ENCODE measurements at regions of chr2 and their contacts with region 1.

Region 1: DNA sequence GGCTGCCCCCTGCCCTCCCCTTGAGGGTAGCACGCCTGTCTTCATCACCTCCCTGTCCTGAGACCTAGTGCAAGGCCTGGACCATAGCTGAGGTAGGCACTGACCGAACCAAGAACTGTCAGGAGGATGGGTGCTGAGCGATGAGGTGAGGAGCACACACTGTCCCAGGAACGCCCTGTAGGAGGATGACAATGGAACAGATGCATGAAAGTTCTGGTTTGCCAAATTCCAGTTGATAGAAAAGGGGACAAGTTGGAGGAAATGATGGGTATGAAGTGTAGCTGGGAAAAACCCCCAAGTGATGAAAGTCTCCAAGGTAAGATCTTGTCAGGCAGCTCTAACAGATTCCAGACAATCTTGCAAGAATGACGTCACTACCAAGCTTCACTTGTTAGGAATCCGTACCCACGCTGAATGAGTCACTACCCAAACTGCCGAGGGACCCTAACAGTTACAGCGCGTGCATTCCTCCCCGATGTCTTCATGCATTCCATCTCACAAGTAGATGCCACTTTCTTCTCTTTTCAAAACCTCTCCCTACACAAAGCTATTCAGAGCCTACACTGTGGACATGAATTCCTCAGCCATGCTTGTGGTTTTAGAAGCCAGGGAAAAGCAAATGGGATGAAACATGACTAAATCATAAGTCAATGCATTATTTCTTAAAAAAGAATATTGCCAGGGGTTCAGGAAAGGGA is 27.6 kb downstream of the MRPL33 start:
- DNase-seq: peak; percentile 58 to 95
- H3K4me3 ChIP-seq: no peak overlapping the region
- H3K27ac ChIP-seq: peak overlapping the region; percentile 96 to 98
- H3K4me1 ChIP-seq: peaks cover 30 to 57% of the 10 kb centered on the region in 2 donors
- H3K27me3 ChIP-seq: no peaks in the 10 kb centered on the region
- CTCF ChIP-seq: no peak

Region 2: DNA sequence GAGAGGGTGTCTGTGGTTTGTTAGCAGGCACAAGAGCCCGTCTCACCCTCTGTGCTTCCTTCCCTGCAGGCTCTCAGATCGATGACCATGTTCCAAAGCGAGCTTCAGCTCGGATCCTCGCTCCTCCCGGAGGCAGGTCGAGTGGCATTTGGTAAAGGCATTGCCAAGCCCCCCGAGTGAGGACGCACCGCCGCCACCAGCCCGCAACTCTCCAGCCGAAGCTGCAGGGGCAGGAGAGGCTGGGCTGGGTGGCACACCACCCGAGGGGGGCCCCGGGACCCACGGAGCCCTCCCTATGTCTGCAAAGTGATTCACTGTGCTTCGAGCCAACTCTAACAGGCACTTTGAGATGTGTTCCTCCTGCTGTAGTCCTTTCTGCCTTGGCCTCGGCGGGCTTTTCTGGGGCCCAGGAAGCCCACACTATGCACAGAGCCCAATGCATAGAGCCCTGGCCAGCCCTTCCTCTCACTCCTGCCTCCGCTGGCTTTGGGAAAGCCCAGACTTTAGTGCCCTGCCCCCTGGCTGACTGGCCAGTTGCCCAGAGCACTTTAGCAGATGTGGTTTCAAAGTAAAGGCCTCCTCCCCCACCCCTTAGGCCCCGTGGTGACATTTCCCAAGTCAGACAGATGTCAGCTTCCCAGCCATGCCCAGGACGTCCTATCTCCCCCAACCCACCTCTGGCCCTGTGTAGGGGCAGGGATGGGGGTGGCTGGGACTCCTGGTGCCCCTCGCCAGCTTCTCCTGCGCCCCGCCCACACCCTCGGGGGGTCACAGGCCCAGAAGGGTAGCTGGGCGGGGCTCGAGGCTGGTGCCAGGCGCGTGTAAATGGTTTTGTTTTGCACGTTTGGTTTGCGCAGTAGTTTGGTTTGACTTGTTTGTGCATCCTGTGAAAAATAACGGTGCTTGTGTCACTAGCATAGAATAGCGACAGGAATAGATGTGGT is 852.0 kb before region 1 on chr2:
- intact Hi-C with region 1: no loop called
- DNase-seq: no peak
- H3K4me3 ChIP-seq: no peak overlapping the region
- H3K27ac ChIP-seq: no peak overlapping the region
- H3K4me1 ChIP-seq: no peaks in the 10 kb centered on the region
- H3K27me3 ChIP-seq: no peaks in the 10 kb centered on the region
- CTCF ChIP-seq: no peak

Region 3: DNA sequence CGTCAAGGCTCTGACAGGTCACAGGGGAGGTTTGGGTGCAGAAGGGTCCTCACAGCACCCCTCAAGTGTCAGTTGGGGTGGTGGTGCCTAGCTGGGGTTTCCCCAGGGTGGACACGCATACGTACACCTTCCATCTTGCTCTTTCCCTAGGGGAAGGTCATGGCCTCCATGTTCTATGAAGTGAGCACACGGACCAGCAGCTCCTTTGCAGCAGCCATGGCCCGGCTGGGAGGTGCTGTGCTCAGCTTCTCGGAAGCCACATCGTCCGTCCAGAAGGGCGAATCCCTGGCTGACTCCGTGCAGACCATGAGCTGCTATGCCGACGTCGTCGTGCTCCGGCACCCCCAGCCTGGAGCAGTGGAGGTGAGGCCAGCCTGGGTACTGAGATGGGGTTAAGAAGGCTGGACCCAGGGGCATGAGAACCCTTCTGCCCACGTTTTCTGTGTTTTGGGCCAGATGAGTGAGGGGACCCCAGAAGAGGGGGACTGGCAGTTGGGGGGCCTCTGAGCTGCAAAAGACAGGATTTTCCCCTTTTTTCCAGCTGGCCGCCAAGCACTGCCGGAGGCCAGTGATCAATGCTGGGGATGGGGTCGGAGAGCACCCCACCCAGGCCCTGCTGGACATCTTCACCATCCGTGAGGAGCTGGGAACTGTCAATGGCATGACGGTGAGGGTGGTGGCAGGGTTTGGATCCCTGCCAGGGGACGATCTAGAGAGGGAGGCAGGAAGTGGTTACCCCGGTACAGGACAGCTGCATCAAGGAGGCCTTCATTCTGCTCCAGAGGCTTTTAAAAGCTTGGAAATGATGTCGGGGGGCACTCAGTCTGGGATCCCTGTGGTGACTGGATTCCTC is 557.1 kb before region 1 on chr2:
- intact Hi-C with region 1: no loop called
- DNase-seq: no peak
- H3K4me3 ChIP-seq: no peak overlapping the region
- H3K27ac ChIP-seq: no peak overlapping the region
- H3K4me1 ChIP-seq: no peaks in the 10 kb centered on the region
- H3K27me3 ChIP-seq: no peaks in the 10 kb centered on the region
- CTCF ChIP-seq: no peak

Region 4: DNA sequence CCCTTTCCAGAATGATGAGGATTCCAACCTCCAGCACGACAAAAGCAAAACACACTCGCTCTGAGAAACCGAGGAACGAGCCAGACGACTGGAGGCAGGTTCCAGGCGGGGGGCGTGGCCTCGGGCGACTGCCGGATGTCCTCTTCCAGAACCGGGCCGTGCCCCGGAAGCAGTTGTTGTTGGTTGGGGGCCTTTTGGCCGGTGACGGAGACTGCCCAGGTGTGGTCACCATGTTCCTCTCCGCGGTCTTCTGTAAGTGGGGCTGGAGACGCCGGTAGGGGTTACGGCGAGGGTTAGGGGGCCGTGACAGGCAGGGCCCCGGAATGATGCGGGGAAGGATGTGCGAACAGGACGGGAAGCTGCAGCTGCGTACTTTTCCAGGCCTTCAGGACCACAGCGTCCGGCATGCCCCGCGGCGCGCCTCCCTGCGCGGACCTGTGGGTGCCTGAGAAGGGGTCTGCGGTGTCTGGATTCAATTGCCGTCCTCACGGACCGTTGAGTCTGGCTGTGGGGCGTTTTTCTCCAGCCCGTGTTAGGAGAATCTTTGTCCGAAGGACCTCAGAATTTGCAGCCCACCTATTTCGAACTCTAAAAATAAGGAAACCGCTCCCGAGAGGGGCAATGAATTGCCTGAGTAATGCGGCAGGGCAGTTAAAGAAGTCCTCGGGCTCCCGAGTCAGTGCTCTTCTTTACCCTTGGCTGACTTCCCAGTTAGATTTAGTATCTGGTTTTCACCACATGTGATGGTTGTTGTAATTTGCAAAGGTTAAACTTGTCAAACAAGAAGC is 27.4 kb before region 1 on chr2 and contains the start of gene MRPL33:
- intact Hi-C with region 1: loop called (anchors 1 kb)
- DNase-seq: peak; percentile 83 to 97
- H3K4me3 ChIP-seq: peak within 1 kb of the TSS; percentile 80 to 92
- H3K27ac ChIP-seq: peak within 1 kb of the TSS; percentile 90 to 96
- H3K4me1 ChIP-seq: peaks cover 9 to 22% of the 10 kb centered on the region in 2 donors
- H3K27me3 ChIP-seq: no peaks in the 10 kb centered on the region
- CTCF ChIP-seq: no peak
- total RNA-seq, gene MRPL33: 3.4 TPM

Region 5: DNA sequence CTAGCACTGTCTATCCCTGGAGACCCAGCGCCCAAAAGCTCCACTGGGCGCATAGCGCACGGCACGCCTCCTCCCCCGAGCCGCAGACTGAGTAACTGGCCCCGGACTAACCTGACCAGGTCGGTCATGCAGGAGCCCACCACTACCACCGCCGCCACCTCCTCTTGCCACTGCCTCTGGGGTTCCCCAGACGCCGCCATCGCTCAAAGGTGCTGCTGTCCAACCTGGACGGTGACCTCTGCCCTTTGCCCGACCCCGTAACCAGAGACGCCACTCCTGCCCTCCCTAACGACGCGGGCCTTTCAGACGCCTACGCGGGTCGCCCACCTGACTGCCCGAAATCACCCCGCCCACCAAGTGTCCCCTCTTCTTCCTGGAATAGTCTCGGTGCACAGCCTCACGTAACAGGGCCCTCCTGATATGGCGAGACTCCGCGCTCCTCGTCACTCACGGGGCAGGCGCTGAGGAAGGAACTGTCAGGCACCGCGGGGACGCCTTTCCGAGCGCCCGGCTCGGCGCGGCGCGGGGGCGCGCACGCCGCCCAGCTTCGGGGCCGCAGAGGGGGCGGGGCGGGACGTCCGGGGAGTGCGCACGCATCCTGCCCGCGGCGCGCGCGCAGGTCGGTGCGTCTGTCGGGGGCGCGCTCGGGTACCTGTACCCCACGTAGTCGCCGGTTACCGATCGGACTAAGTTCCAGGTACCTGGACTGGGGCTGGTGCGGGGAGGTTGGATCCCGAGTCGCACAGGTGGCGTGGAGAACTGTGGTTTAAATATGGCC is 91.2 kb after region 1 on chr2 and contains the starts of genes BABAM2 and RBKS:
- intact Hi-C with region 1: loop called (anchors 2 kb)
- DNase-seq: peak; percentile 75 to 91
- H3K4me3 ChIP-seq: peak within 1 kb of the TSS; percentile 69 to 72
- H3K27ac ChIP-seq: peak within 1 kb of the TSS; percentile 90 to 95
- H3K4me1 ChIP-seq: peaks cover 0 to 21% of the 10 kb centered on the region in 2 donors
- H3K27me3 ChIP-seq: no peaks in the 10 kb centered on the region
- CTCF ChIP-seq: no peak
- total RNA-seq, gene BABAM2: 19.6 TPM
- total RNA-seq, gene RBKS: not detected

Measured in ascending aorta (tissue), 2 donors.